WTC11 (cell line): ENCODE measurements at regions of chr3 and their contacts with region 1.

Region 1: GRCh38 chr3:112111785-112112402 is 21.2 kb downstream of the GCSAM start:
- DNase-seq: peak; percentile 63
- ATAC-seq: peak; percentile 98
- H3K4me3 Mint-ChIP-seq: no peak overlapping the region
- H3K27ac Mint-ChIP-seq: 0 out of 2 replicates have a peak overlapping the region, but pooled peaks have one; percentile 43
- H3K4me1 Mint-ChIP-seq: peaks cover 11% of the 10 kb centered on the region
- H3K27me3 Mint-ChIP-seq: no peaks in the 10 kb centered on the region
- CTCF ChIP-seq: peak; percentile 76

Region 2: DNA sequence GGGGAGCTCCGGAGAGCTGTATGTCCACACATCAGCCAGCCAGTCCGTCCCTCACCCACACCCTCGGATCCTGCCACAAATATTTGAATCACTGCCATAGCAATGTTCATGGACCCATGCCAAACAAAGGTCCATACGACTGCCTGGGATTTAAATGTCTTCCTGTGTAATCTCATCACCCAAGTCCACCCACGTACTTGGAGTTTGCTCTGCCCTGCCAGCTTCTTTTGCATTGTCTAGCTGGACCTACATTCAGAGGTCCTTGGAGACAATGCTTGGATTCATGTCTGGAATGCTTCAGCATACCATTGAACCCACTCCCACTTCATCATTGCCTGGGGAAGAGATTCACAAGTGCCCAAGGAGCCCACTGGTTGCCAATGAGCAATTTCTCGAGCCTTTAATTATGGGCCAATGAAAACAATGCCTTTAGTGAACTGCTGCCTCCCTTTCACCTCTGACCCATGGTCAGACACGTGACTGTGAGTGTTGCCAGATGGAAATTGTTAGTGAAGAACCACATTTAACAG is 343.3 kb before region 1 on chr3:
- CTCF ChIA-PET with region 1: no interaction called
- POLR2A ChIA-PET with region 1: no interaction called
- DNase-seq: no peak
- ATAC-seq: no peak
- H3K4me3 Mint-ChIP-seq: no peak overlapping the region
- H3K27ac Mint-ChIP-seq: no peak overlapping the region
- H3K4me1 Mint-ChIP-seq: no peaks in the 10 kb centered on the region
- H3K27me3 Mint-ChIP-seq: no peaks in the 10 kb centered on the region
- CTCF ChIP-seq: no peak

Region 3: DNA sequence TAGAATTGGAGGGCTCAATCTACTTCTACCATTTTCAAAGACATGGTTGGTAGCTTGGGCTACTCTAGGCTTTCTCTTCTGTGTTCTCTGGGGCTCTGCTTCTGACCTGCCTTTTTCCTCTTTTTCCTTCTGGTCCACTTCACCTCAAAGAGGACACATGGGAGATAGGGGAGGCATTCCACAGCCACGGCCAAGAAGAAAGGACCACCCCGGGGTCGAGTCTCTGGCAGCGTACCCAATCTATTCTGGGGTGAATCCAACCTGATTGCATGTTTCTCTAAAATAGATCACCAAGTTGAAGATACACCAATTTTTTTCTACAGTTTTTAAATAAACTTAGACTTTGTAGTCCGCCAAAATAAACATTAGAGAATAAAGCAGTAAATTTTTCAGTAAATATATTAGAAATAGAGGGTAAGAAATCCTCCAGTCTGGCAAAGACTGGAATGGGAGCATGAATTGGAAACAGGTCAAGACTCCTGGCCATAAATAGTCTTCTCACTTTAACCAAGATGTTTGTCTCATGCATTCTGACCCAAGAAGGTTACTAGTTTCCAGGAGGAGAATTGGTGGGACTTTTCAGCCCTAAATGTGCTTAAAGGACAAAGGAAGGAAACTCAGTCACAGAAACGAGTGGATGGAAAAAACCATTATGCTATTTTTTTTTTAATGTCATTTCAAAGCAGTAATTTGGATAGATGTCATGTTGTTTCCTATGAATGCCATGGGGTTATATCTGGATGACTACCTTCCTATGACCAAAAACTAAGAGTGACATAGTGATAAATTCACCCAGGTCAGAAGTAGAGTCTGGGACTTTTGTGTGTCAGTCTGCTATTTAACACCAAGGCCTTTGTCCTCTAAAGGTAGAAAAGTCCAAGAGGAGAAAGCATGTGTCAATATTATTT is 324.1 kb before region 1 on chr3:
- CTCF ChIA-PET with region 1: no interaction called
- POLR2A ChIA-PET with region 1: no interaction called
- DNase-seq: no peak
- ATAC-seq: no peak
- H3K4me3 Mint-ChIP-seq: no peak overlapping the region
- H3K27ac Mint-ChIP-seq: no peak overlapping the region
- H3K4me1 Mint-ChIP-seq: peaks cover 3% of the 10 kb centered on the region
- H3K27me3 Mint-ChIP-seq: no peaks in the 10 kb centered on the region
- CTCF ChIP-seq: no peak

Region 4: DNA sequence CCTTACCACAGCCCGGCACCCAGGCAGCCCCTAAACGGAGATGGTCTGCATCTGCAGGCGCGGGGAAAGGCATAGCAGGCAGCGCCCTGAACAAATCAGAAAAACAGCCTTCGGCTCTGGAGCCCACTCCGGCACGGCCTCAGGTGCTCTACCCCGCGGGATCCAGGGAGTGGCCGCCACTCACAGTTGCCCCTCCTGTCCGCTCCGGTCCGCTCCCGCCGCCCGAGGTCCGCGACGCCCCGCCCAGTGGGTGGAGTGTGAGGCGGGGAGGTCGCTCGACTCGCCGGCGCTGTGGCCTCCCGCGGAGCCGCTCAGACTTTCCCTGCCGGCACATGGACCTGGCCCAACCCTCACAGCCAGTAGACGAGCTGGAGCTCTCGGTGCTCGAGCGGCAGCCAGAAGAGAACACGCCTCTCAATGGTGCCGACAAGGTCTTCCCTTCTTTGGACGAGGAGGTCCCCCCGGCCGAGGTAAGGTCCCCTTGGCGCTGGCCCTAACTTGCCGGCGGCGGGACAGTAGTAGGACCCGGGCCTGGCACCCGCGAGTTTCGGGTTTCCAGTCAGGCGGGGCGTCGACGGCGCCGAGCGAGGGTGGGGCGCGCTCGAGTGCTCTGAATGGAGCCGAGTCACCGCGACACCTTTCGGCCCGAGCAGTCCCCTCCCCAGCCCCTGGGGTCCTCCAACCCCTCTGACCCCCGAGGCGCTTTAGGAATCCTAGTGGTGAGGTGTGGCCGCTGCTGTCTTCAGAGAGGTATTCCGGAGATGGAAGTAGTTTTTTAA is 25.6 kb before region 1 on chr3 and contains the start of gene C3orf52:
- CTCF ChIA-PET with region 1: interaction called, 13 read pairs
- POLR2A ChIA-PET with region 1: no interaction called
- DNase-seq: peak; percentile 95
- ATAC-seq: peak; percentile 89
- H3K4me3 Mint-ChIP-seq: peak within 1 kb of the TSS; percentile 95
- H3K27ac Mint-ChIP-seq: peak within 1 kb of the TSS; percentile 96
- H3K4me1 Mint-ChIP-seq: peaks cover 54% of the 10 kb centered on the region
- H3K27me3 Mint-ChIP-seq: peaks cover 20% of the 10 kb centered on the region
- CTCF ChIP-seq: no peak
- total RNA-seq, gene C3orf52: 10.2 to 14.3 TPM (median 10.3 TPM) in 3 replicates

Region 5: GRCh38 chr3:112092496-112093179 is 19.3 kb before region 1 on chr3:
- CTCF ChIA-PET with region 1: interaction called, 13 read pairs
- POLR2A ChIA-PET with region 1: interaction called, 3 read pairs
- DNase-seq: no peak
- ATAC-seq: peak; percentile 81
- H3K4me3 Mint-ChIP-seq: no peak overlapping the region; the same call in 1 of the 2 replicates
- H3K27ac Mint-ChIP-seq: peak overlapping the region; percentile 69
- H3K4me1 Mint-ChIP-seq: peaks cover 54% of the 10 kb centered on the region
- H3K27me3 Mint-ChIP-seq: no peaks in the 10 kb centered on the region
- CTCF ChIP-seq: no peak

Region 6: GRCh38 chr3:112128843-112129727 is 17.2 kb after region 1 on chr3:
- CTCF ChIA-PET with region 1: interaction called, 73 read pairs
- POLR2A ChIA-PET with region 1: no interaction called
- DNase-seq: no peak
- ATAC-seq: peak; percentile 51
- H3K4me3 Mint-ChIP-seq: no peak overlapping the region
- H3K27ac Mint-ChIP-seq: peak overlapping the region; percentile 65
- H3K4me1 Mint-ChIP-seq: peaks cover 59% of the 10 kb centered on the region
- H3K27me3 Mint-ChIP-seq: no peaks in the 10 kb centered on the region
- CTCF ChIP-seq: no peak

Region 7: GRCh38 chr3:112136959-112137693 is 25.2 kb after region 1 on chr3:
- CTCF ChIA-PET with region 1: interaction called, 44 read pairs
- POLR2A ChIA-PET with region 1: no interaction called
- DNase-seq: peak; percentile 36
- ATAC-seq: peak; percentile 94
- H3K4me3 Mint-ChIP-seq: no peak overlapping the region
- H3K27ac Mint-ChIP-seq: peak overlapping the region; percentile 90
- H3K4me1 Mint-ChIP-seq: peaks cover 46% of the 10 kb centered on the region
- H3K27me3 Mint-ChIP-seq: no peaks in the 10 kb centered on the region
- CTCF ChIP-seq: no peak

Region 8: GRCh38 chr3:112333002-112333380 is 221.1 kb after region 1 on chr3 and contains the start of gene CD200:
- CTCF ChIA-PET with region 1: interaction called, 12 read pairs
- POLR2A ChIA-PET with region 1: no interaction called
- DNase-seq: peak; percentile 85
- ATAC-seq: peak; percentile 86
- H3K4me3 Mint-ChIP-seq: peak within 1 kb of the TSS; percentile 88
- H3K27ac Mint-ChIP-seq: peak within 1 kb of the TSS; percentile 96
- H3K4me1 Mint-ChIP-seq: peaks cover 40% of the 10 kb centered on the region
- H3K27me3 Mint-ChIP-seq: no peaks in the 10 kb centered on the region
- CTCF ChIP-seq: no peak
- total RNA-seq, gene CD200: 46.8 to 56.1 TPM (median 54.1 TPM) in 3 replicates